ENCODE measurements at regions of chr15 and their contacts with region 1.

Region 1: DNA sequence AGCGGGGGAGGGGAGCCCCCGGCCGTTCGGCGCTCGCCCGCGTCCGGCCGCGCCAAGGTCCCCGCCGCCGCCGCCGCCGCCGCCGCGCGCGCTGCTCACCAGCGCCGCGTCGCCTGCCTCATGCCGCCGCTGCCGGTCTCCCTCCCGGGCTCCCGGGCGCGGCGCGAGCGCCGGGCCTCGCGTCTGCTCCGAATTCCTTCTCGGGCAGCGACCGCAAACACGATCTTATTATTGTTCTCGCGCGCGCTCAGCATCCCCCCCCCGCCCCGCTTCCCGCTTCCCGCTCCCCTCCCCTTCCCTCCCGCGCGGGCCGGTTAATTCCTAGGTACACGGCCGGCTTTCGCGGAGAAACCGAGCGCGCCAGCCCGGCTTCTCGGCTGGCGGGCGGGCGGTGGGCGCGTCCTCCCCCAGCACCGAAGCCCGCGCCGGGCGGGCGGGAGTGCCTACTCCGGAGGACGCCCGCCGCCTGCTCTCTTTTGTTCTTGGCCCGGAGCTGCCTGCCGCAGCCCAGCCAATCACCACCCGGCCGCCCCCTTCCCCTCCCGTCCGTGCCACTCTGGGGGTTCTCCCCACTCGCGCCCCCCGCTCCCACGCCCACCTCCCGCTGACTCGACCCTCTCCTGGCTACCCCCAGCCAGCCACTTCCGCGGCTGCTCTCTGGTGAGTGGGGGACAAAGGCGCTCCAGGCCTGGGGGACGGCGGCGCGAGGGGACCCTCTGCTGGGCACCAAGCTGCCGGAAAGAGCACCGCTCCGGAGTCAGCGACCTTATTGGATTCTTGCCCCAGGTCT is at the start of gene HDGFL3:
- DNase-seq: peak; percentile 38
- H3K4me3 Mint-ChIP-seq: peak within 1 kb of the TSS; percentile 96
- H3K27ac Mint-ChIP-seq: no peak within 1 kb of the TSS
- H3K4me1 Mint-ChIP-seq: peaks cover 27% of the 10 kb centered on the region
- H3K27me3 Mint-ChIP-seq: peaks cover 11% of the 10 kb centered on the region
- total RNA-seq, gene HDGFL3: 54.7 and 57.5 TPM in 2 replicates

Region 2: GRCh38 chr15:82530606-82531379 is 677.0 kb before region 1 on chr15:
- intact Hi-C with region 1: loop called (anchors 10 kb)
- DNase-seq: peak; percentile 57
- H3K4me3 Mint-ChIP-seq: no peak overlapping the region
- H3K27ac Mint-ChIP-seq: peak overlapping the region; percentile 78
- H3K4me1 Mint-ChIP-seq: peaks cover 18% of the 10 kb centered on the region
- H3K27me3 Mint-ChIP-seq: no peaks in the 10 kb centered on the region

Region 3: GRCh38 chr15:82789491-82789890 is 418.3 kb before region 1 on chr15:
- intact Hi-C with region 1: no loop called
- DNase-seq: no peak
- H3K4me3 Mint-ChIP-seq: no peak overlapping the region
- H3K27ac Mint-ChIP-seq: no peak overlapping the region
- H3K4me1 Mint-ChIP-seq: no peaks in the 10 kb centered on the region
- H3K27me3 Mint-ChIP-seq: peaks cover 21% of the 10 kb centered on the region

Region 4: GRCh38 chr15:83011271-83012075 is 196.3 kb before region 1 on chr15 and contains the start of gene C15orf40:
- intact Hi-C with region 1: loop called (anchors 1 kb)
- DNase-seq: peak; percentile 84
- H3K4me3 Mint-ChIP-seq: peak within 1 kb of the TSS; percentile 99
- H3K27ac Mint-ChIP-seq: peak within 1 kb of the TSS; percentile 98
- H3K4me1 Mint-ChIP-seq: peaks cover 50% of the 10 kb centered on the region
- H3K27me3 Mint-ChIP-seq: no peaks in the 10 kb centered on the region
- total RNA-seq, gene C15orf40: 24.2 and 29.0 TPM in 2 replicates

Region 5: DNA sequence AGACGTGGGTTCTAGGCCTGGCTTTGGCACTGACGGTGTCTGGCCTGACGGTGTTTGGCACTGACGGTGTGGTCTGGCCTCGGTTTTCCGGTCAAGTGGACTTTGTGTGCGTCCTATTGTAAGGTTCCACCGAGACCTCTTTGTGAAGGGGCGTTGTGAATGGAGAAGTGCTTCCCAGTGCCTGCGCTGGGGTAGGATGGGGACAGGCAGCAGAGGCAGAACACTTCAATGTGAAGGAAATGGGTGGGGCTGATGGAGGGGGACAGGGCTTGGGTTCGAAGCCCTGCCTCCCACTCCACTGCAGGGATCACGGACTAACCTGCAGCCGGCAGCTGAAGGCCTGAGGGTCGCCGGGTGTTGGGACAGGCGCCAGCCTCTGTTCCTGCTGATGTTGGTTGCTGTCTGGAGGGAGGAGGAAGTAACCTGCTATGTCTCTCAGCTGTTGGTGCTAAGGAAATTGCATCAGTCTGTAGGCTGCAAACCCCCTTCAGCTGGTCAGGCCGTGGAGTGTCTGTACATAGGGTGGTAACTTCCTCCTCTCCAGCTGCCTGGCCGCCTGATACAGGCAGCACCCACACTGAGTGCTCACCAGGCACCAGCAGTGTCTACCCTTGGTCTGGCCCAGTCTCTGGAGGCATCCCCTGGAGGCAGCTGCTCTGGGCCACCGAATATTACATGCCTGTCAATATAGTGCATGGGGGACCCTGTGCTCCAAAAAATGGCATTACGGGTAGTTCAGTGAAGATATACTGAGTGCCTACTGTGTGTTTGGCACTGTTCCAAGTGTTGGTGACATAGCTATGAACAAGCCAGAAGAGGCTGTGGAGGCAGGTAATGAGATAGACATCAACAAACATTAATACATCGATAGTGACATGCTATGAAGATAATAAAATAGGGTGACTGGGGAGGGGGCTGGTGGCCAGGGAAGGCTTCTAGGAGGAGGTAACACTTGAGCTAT is 99.3 kb before region 1 on chr15:
- intact Hi-C with region 1: loop called (anchors 2 kb)
- DNase-seq: peak; percentile 27
- H3K4me3 Mint-ChIP-seq: peak overlapping the region; percentile 94
- H3K27ac Mint-ChIP-seq: peak overlapping the region; percentile 86
- H3K4me1 Mint-ChIP-seq: peaks cover 44% of the 10 kb centered on the region
- H3K27me3 Mint-ChIP-seq: peaks cover 11% of the 10 kb centered on the region

Region 6: DNA sequence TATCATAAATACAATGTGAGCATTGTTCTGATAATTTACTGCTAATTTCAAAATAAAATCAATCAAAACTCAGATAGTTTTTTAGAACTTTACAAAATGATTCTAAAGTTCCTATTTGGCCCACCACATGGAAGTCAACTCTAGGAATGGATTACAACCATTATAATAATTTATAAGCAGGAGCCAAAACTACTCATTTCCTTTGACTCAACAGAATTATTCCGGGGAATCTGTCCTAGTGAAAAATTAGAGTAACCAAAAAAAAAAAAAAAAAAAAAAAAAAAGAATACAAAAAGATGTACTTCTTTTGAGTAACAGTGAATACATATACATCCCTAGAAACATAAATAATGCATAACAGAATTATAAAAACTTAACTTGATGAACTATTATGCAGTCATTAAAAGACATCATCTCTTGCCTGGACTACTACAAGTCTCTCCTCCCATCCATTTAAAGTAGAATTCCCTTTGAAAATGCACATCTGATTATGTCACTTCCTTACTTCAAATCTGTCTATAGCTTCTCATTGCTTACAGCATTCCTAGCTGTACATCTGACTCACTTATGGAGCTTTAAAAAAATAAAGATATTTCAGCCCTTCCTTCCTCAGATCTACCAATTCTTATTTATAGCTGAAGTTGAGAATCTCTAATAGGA is 43.6 kb before region 1 on chr15:
- intact Hi-C with region 1: loop called (anchors 1 kb)
- DNase-seq: no peak
- H3K4me3 Mint-ChIP-seq: peak overlapping the region; percentile 66
- H3K27ac Mint-ChIP-seq: peak overlapping the region; percentile 87
- H3K4me1 Mint-ChIP-seq: peaks cover 63% of the 10 kb centered on the region
- H3K27me3 Mint-ChIP-seq: peaks cover 1% of the 10 kb centered on the region

Region 7: GRCh38 chr15:83928392-83928734 is 720.5 kb after region 1 on chr15:
- intact Hi-C with region 1: loop called (anchors 10 kb)
- DNase-seq: no peak
- H3K4me3 Mint-ChIP-seq: peak overlapping the region; percentile 1
- H3K27ac Mint-ChIP-seq: peak overlapping the region; percentile 88
- H3K4me1 Mint-ChIP-seq: peaks cover 20% of the 10 kb centered on the region
- H3K27me3 Mint-ChIP-seq: peaks cover 1% of the 10 kb centered on the region

Measured in activated T-helper 1 cell treated with anti-CD3 and anti-CD28 coated beads, Interleukin-12 subunit alpha, Interleukin-12 subunit beta, Interleukin-2, Interleukin-4 antibody, amounts not matched to agents 30 ng/mL and 10 ng/mL and 1 ng/mL, durations not matched to agents 14 hours and 24 hours and 36 hours (primary cell).